Dendritic cell treated with granulocyte-macrophage colony-stimulating factor and Interleukin-4, amounts not matched to agents 40 ng/mL and 50 ng/mL, for 4 days (primary cell): ENCODE measurements at regions of chr18 and their contacts with region 1.

Region 1: GRCh38 chr18:42114310-42114943 is 159.4 kb downstream of the PIK3C3 start:
- H3K4me3 Mint-ChIP-seq: no peak overlapping the region
- H3K27ac Mint-ChIP-seq: no peak overlapping the region
- H3K4me1 Mint-ChIP-seq: peaks cover 9% of the 10 kb centered on the region
- H3K27me3 Mint-ChIP-seq: no peaks in the 10 kb centered on the region

Region 2: GRCh38 chr18:42053188-42053781 is 61.1 kb before region 1 on chr18:
- intact Hi-C with region 1: no loop called
- H3K4me3 Mint-ChIP-seq: no peak overlapping the region
- H3K27ac Mint-ChIP-seq: no peak overlapping the region
- H3K4me1 Mint-ChIP-seq: no peaks in the 10 kb centered on the region
- H3K27me3 Mint-ChIP-seq: no peaks in the 10 kb centered on the region

Region 3: GRCh38 chr18:42211201-42211600 is 96.8 kb after region 1 on chr18:
- intact Hi-C with region 1: no loop called
- H3K4me3 Mint-ChIP-seq: no peak overlapping the region
- H3K27ac Mint-ChIP-seq: no peak overlapping the region
- H3K4me1 Mint-ChIP-seq: no peaks in the 10 kb centered on the region
- H3K27me3 Mint-ChIP-seq: no peaks in the 10 kb centered on the region

Region 4: DNA sequence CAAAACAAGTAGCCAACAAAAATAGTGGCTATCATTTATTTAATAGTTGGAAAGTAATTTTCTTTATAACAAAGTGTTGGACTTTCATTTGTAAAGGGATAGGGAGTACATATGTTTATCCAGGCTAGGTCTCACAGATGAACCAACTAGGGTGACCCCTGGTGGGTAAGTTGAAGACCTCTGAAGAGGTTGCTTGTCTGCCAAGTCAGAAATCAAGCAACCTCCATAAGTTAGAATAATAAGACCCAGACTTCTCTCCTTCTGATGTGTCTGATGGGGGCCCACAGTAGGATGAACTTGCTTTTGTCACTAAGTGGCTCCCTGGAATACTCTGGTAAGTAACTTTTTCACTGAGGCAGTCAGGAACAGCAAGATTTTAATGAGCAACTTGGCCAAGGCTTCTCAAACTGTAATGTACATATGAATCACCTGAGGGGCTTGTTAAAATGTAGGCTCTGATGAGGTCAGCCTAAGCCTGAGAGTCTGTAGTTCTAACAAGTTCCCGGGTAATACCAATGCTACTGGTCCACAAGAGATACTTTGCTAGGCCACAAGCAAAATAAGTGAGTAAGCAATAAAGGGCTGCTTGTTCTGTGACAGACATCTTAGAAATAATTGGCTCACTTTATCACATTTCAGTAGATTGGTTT is 160.2 kb after region 1 on chr18:
- intact Hi-C with region 1: loop called (anchors 10 kb)
- H3K4me3 Mint-ChIP-seq: no peak overlapping the region
- H3K27ac Mint-ChIP-seq: no peak overlapping the region
- H3K4me1 Mint-ChIP-seq: no peaks in the 10 kb centered on the region
- H3K27me3 Mint-ChIP-seq: no peaks in the 10 kb centered on the region

Region 5: GRCh38 chr18:43587538-43588153 is 1473.2 kb after region 1 on chr18:
- intact Hi-C with region 1: loop called (anchors 10 kb)
- H3K4me3 Mint-ChIP-seq: no peak overlapping the region
- H3K27ac Mint-ChIP-seq: no peak overlapping the region
- H3K4me1 Mint-ChIP-seq: no peaks in the 10 kb centered on the region
- H3K27me3 Mint-ChIP-seq: no peaks in the 10 kb centered on the region